ENCODE measurements at regions of chr7 and their contacts with region 1.

Region 1: DNA sequence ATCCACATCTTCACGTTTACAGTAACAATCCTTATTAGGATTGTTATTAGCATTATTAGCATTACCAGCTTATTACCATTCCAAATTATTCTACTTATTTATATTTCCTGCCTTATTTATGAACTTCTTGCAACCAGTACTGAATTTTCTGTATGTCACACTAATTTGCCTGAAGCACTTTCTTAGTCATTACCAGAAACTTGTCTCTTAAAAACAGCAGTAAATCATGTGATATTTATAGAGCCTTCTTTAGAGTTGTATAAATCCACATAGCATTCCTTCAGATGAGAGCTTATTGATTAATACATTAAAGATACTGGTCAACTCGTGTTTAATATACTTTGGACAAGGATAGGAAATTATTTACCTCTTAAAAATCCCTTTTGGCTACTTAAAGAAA is 618.6 kb downstream of the SUGCT start:
- DNase-seq: no peak
- H3K4me3 ChIP-seq: no peak overlapping the region
- H3K27ac ChIP-seq: no peak overlapping the region
- H3K4me1 ChIP-seq: peaks cover 2 to 12% (median 7%) of the 10 kb centered on the region in 4 experiments; a peak in 5 of 7 replicates
- H3K27me3 ChIP-seq: no peaks in the 10 kb centered on the region
- CTCF ChIP-seq: no peak
- EP300 ChIP-seq: no peak
- POLR2A ChIP-seq: no peak
- RAD21 ChIP-seq: no peak

Region 2: DNA sequence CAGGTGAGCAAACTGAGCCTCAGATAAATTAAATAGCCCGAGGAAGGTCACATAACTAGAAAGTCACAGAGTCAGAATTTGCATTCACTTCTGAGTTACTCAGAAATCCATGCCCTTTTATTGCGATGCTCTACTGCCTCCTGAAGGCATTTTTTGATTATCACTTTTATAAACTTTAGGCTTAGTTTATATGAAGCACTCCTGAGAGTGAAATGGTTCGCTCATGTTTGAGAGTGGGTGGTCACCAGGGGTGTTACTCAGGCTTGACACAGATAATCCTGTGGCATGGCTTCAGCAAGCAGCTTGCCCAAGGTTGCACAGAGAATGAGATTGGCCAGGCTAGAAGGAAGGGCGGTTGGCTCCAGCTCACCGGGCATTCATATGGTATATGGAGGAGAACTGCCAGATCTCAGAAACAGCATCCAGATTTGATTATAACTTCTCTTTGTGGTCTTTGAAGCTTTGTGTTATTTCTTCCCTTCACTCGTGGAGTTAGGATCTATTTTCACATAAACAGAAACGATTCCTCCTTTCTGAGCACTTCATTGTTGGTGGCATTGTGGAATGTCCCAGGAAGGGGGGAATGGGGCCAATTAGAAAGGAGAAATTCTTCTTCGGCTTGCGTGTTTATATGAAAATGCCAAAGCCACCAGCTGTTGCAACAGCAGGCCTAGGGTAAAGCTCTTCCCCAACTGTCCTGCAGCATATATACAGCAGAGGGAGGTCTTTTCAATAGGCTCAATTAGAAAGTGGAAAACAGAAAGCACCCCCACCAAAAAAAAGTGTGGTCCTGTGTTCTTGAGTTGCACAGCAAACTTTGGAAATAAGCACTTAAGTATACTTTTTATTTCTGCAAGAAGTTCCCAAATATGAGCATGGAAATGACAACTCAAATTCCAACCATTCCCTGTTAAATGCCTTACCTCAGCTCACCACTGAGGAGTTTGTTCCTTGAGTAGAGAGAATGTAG is 10.1 kb after region 1 on chr7:
- CTCF ChIA-PET with region 1: interaction called, 10 read pairs
- POLR2A ChIA-PET with region 1: no interaction called
- DNase-seq: no peak
- H3K4me3 ChIP-seq: no peak overlapping the region
- H3K27ac ChIP-seq: no peak overlapping the region
- H3K4me1 ChIP-seq: peaks cover 0 to 3% (median 0%) of the 10 kb centered on the region in 4 experiments; a peak in 2 of 7 replicates
- H3K27me3 ChIP-seq: no peaks in the 10 kb centered on the region
- CTCF ChIP-seq: no peak
- EP300 ChIP-seq: no peak
- POLR2A ChIP-seq: no peak
- RAD21 ChIP-seq: peak; percentile 16 to 24; a peak in 3 of 4 replicates

Measured in H1 (cell line).